Posterior cingulate gyrus (tissue), 11 donors: ENCODE measurements at regions of chr18 and their contacts with region 1.

Region 1: GRCh38 chr18:76922107-76922506 is 99.8 kb downstream of the ZNF236 start:
- DNase-seq: peak in 9 of 10 donors; percentile 39 to 96 (median 71)

Region 2: GRCh38 chr18:77061946-77062517 is 139.9 kb after region 1 on chr18:
- intact Hi-C with region 1: loop called (anchors 1 kb)
- DNase-seq: peak in 4 of 10 donors; percentile 52 to 92 (median 71)